K562 (cell line): ENCODE measurements at regions of chr4 and their contacts with region 1.

Region 1: DNA sequence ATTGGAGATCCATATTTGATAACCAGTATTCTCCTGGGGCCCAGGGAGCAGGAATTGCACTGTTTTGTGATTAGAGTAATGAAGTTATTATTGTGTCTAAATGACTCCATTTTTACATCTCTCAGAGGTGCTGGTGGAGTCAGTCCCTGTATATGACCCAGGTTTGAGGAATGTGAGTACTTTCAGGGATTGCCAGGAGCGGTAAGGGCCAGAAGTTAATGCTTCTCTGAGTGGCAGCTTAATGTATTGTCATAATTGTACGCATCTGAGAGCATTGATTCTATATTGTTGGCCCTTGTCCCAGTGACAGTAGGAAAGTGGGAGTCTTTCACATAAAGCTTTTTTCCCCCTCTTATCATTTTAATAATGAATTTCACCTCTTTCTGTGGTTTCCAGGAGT is 146.2 kb downstream of the GATB start:
- DNase-seq: no peak
- ATAC-seq: no peak
- H3K4me3 ChIP-seq: no peak overlapping the region
- H3K27ac ChIP-seq: no peak overlapping the region
- H3K4me1 ChIP-seq: no peaks in the 10 kb centered on the region
- H3K27me3 ChIP-seq: peaks cover 0 to 4% of the 10 kb centered on the region in 2 experiments; a peak in 1 of 5 replicates
- CTCF ChIP-seq: no peak
- EP300 ChIP-seq: no peak
- POLR2A ChIP-seq: no peak
- RAD21 ChIP-seq: no peak

Region 2: GRCh38 chr4:151276787-151277562 is 337.6 kb before region 1 on chr4 and contains the start of gene PRSS48:
- CTCF ChIA-PET with region 1: no interaction called
- POLR2A ChIA-PET with region 1: no interaction called
- in situ Hi-C with region 1: no loop called
- intact Hi-C with region 1: loop called (anchors 5 kb)
- DNase-seq: peak; percentile 62 to 69 (median 64)
- ATAC-seq: peak; percentile 99
- H3K4me3 ChIP-seq: no peak within 1 kb of the TSS
- H3K27ac ChIP-seq: no peak within 1 kb of the TSS
- H3K4me1 ChIP-seq: no peaks in the 10 kb centered on the region
- H3K27me3 ChIP-seq: peaks cover 3 to 4% of the 10 kb centered on the region in 2 experiments; a peak in 2 of 5 replicates
- CTCF ChIP-seq: peak; percentile 74 to 87 (median 79)
- EP300 ChIP-seq: no peak
- POLR2A ChIP-seq: no peak
- RAD21 ChIP-seq: peak; percentile 37 to 69
- polyA plus RNA-seq, gene PRSS48: not detected

Region 3: GRCh38 chr4:151824656-151825055 is 210.1 kb after region 1 on chr4:
- CTCF ChIA-PET with region 1: no interaction called
- POLR2A ChIA-PET with region 1: no interaction called
- in situ Hi-C with region 1: no loop called
- intact Hi-C with region 1: no loop called
- DNase-seq: no peak
- ATAC-seq: no peak
- H3K4me3 ChIP-seq: no peak overlapping the region
- H3K27ac ChIP-seq: no peak overlapping the region
- H3K4me1 ChIP-seq: no peaks in the 10 kb centered on the region
- H3K27me3 ChIP-seq: peaks cover 0 to under 1% of the 10 kb centered on the region in 2 experiments; a peak in 3 of 5 replicates
- CTCF ChIP-seq: no peak
- EP300 ChIP-seq: no peak
- POLR2A ChIP-seq: no peak
- RAD21 ChIP-seq: no peak